ENCODE measurements at regions of chr2 and their contacts with region 1.

Region 1: GRCh38 chr2:16507655-16508489 is 157.8 kb downstream of the CYRIA start:
- DNase-seq: peak; percentile 96
- H3K4me3 ChIP-seq: peak overlapping the region in 1 of 2 experiments; percentile 44; a peak in 3 of 4 replicates
- H3K27ac ChIP-seq: no peak overlapping the region; a peak in 1 of 4 replicates
- H3K4me1 ChIP-seq: peaks cover 0 to 23% of the 10 kb centered on the region in 2 experiments; a peak in 1 of 4 replicates
- H3K27me3 ChIP-seq: no peaks in the 10 kb centered on the region
- CTCF ChIP-seq: peak; percentile 35
- EP300 ChIP-seq: no peak
- RAD21 ChIP-seq: peak; percentile 93

Region 2: DNA sequence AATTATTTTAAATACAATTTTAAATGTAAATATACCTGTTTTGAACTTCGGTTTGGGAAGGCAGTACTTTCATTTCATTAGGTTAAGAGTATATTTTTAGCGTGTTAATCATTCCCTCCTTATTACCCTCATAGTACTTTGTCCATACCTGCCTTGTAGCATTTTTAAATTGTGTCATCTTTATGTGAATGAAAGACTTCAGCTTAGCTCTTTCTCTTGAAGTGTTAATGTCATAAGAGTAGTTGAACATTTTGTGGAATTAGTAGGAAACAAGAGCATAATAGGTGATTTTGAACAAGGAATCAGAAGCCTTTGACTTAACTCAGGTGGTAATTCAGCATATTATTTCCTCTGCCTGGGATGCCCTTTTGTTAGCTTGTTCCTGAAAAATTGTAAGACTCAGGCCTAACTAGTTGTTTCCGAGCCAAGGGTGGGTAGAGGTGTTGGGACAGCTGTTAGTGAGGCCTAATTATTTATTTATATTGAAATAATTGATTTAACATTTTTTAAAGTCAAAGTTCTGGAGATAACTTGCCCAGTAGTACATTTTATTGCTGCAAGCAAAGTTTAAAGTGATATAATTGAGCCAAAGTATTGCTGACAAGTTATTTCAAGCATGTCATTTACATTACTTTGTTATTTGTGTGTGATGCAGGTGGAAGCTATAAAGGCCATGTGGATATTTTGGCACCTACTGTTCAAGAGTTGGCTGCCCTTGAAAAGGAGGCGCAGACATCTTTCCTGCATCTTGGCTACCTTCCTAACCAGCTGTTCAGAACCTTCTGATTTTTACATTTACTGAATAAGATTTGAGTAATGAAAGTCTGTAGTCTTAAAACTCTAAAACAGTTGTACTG is 877.5 kb before region 1 on chr2:
- CTCF ChIA-PET with region 1: interaction called, 67 read pairs
- POLR2A ChIA-PET with region 1: interaction called, 4 read pairs
- DNase-seq: no peak
- H3K4me3 ChIP-seq: no peak overlapping the region
- H3K27ac ChIP-seq: no peak overlapping the region; a peak in 1 of 4 replicates
- H3K4me1 ChIP-seq: peaks cover 0 to 8% of the 10 kb centered on the region in 2 experiments; a peak in 1 of 4 replicates
- H3K27me3 ChIP-seq: no peaks in the 10 kb centered on the region
- CTCF ChIP-seq: no peak
- EP300 ChIP-seq: no peak
- RAD21 ChIP-seq: no peak

Region 3: DNA sequence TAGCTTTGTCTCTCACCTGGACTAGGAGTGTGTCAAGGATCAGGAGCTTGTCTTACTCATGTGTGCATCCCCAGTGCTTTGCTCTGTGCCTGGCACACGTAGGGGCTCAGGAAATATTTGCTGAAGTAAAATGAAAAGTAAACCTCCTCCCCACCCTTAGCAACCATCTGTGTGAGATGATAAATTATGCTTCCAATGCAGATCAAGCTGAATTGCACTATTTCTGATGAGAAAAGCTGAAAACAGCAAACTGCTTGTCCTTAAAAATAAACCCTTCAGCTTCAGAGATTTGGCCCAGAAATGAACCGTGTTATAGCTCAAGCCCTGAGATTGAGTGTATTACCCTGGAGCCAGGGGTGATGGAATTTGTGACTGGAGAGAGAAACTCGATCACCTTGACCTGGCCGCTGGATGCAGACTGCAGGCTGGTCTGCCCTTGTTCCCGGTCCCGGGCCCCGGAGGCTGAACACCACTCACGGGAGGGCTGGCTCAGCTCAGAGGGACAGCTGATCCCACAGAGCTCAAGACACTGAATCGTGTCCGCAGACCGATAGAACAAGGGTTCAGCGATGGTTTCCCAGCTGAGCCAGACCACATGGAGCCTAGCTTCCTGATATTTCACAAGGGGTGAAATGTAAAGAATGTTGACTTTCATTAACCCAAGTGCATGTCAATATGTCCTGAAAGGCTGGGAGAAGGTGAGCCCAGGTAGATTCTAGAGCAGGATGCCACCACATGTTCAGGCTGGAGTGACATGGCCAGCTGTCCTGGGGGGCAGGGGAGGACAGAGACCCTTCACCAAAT is 865.7 kb before region 1 on chr2:
- CTCF ChIA-PET with region 1: interaction called, 67 read pairs
- POLR2A ChIA-PET with region 1: no interaction called
- DNase-seq: no peak
- H3K4me3 ChIP-seq: no peak overlapping the region
- H3K27ac ChIP-seq: no peak overlapping the region
- H3K4me1 ChIP-seq: peaks cover 0 to 5% of the 10 kb centered on the region in 2 experiments; a peak in 1 of 4 replicates
- H3K27me3 ChIP-seq: no peaks in the 10 kb centered on the region
- CTCF ChIP-seq: no peak
- EP300 ChIP-seq: no peak
- RAD21 ChIP-seq: no peak

Region 4: GRCh38 chr2:16203069-16203468 is 304.8 kb before region 1 on chr2:
- CTCF ChIA-PET with region 1: no interaction called
- POLR2A ChIA-PET with region 1: no interaction called
- DNase-seq: no peak
- H3K4me3 ChIP-seq: no peak overlapping the region
- H3K27ac ChIP-seq: no peak overlapping the region
- H3K4me1 ChIP-seq: peaks cover 0 to 29% of the 10 kb centered on the region in 2 experiments; a peak in 2 of 4 replicates
- H3K27me3 ChIP-seq: no peaks in the 10 kb centered on the region
- CTCF ChIP-seq: no peak
- EP300 ChIP-seq: no peak
- RAD21 ChIP-seq: no peak

Region 5: GRCh38 chr2:16487686-16488085 is 20.2 kb before region 1 on chr2:
- CTCF ChIA-PET with region 1: interaction called, 66 read pairs
- POLR2A ChIA-PET with region 1: no interaction called
- DNase-seq: peak; percentile 73
- H3K4me3 ChIP-seq: no peak overlapping the region
- H3K27ac ChIP-seq: no peak overlapping the region
- H3K4me1 ChIP-seq: no peaks in the 10 kb centered on the region
- H3K27me3 ChIP-seq: no peaks in the 10 kb centered on the region
- CTCF ChIP-seq: no peak; the same call in 1 of the 2 replicates
- EP300 ChIP-seq: no peak
- RAD21 ChIP-seq: peak; percentile 99

Region 6: DNA sequence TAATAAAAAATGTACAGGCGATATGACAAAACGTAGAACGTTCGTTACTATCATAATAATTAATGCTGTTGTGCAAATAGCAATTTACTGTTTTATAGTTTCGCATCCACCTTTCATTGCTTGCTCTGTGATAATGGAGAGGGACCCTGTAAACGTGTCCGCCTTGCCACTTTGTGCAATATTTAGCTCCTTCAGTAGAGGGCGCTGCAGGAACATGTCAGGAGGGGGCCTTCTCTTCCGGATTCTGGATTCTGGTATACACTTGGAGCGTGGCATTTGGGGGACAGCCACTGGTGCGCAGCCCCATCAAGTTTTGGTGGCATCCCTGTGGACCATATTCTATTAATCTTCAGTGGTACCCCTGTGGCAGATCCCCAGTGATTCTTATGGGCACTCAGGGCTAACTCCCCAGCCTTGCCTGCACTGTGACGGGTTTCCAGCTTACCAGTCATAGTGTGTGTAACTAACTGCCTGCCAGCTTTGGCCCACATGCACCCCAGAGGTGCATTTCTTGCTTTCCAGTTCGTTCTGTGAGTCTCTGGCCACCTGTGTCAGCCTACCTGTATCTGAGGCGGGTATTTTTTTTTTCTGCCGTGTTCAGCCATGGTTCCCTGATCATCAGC is 17.5 kb after region 1 on chr2:
- CTCF ChIA-PET with region 1: interaction called, 19 read pairs
- POLR2A ChIA-PET with region 1: interaction called, 3 read pairs
- DNase-seq: peak; percentile 37
- H3K4me3 ChIP-seq: peak overlapping the region in 1 of 2 experiments; percentile 40; a peak in 1 of 4 replicates
- H3K27ac ChIP-seq: no peak overlapping the region
- H3K4me1 ChIP-seq: peaks cover 0 to 22% of the 10 kb centered on the region in 2 experiments; a peak in 2 of 4 replicates
- H3K27me3 ChIP-seq: no peaks in the 10 kb centered on the region
- CTCF ChIP-seq: peak; percentile 44
- EP300 ChIP-seq: no peak
- RAD21 ChIP-seq: peak; percentile 59